Activated B cell treated with CpG ODN at 0.5 μM for 24 hours (primary cell): ENCODE measurements at regions of chr17 and their contacts with region 1.

Region 1: GRCh38 chr17:75109407-75110233 is at the start of gene ARMC7:
- DNase-seq: peak; percentile 91
- ATAC-seq: peak; percentile 80
- H3K4me3 Mint-ChIP-seq: peak within 1 kb of the TSS; percentile 89
- H3K27ac Mint-ChIP-seq: peak within 1 kb of the TSS; percentile 87
- H3K4me1 Mint-ChIP-seq: peaks cover 36% of the 10 kb centered on the region
- H3K27me3 Mint-ChIP-seq: no peaks in the 10 kb centered on the region
- CTCF ChIP-seq: no peak
- total RNA-seq, gene ARMC7: 11.8 and 15.4 TPM in 2 replicates

Region 2: GRCh38 chr17:75046582-75047289 is 62.9 kb before region 1 on chr17 and contains the starts of genes ATP5PD and KCTD2:
- CTCF ChIA-PET with region 1: interaction called, 4 read pairs
- POLR2A ChIA-PET with region 1: interaction called, 9 read pairs
- intact Hi-C with region 1: loop called (anchors 1 kb)
- DNase-seq: peak; percentile 91
- ATAC-seq: peak; percentile 95
- H3K4me3 Mint-ChIP-seq: peak within 1 kb of the TSS; percentile 97
- H3K27ac Mint-ChIP-seq: peak within 1 kb of the TSS; percentile 86
- H3K4me1 Mint-ChIP-seq: peaks cover 37% of the 10 kb centered on the region
- H3K27me3 Mint-ChIP-seq: no peaks in the 10 kb centered on the region
- CTCF ChIP-seq: no peak
- total RNA-seq, gene ATP5PD: 158 and 181 TPM in 2 replicates
- total RNA-seq, gene KCTD2: 19.5 and 20.2 TPM in 2 replicates

Region 3: GRCh38 chr17:75124041-75124818 is 14.6 kb after region 1 on chr17:
- CTCF ChIA-PET with region 1: interaction called, 116 read pairs
- POLR2A ChIA-PET with region 1: interaction called, 292 read pairs
- intact Hi-C with region 1: no loop called
- DNase-seq: no peak
- ATAC-seq: peak; percentile 75
- H3K4me3 Mint-ChIP-seq: no peak overlapping the region
- H3K27ac Mint-ChIP-seq: peak overlapping the region; percentile 41
- H3K4me1 Mint-ChIP-seq: peaks cover 36% of the 10 kb centered on the region
- H3K27me3 Mint-ChIP-seq: no peaks in the 10 kb centered on the region
- CTCF ChIP-seq: no peak

Region 4: DNA sequence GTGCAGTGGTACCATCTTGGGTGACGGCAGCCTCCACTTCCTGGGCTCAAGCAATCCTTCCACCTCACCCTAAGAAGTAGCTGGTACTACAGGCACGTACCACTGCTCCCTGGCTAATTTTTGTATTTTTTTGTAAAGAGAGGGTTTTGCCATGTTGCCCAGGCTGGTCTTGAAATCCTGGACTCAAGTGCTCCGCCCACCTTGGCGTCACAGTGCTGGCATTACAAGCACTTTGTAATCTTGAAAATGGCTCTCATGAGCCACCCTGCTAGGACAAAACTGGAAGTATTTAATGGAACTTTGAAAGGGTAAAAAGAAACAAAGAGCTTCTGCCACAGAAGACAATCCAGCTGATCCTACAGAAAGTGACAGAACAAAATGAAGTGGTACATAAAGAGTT is 63.9 kb after region 1 on chr17:
- CTCF ChIA-PET with region 1: interaction called, 192 read pairs
- POLR2A ChIA-PET with region 1: interaction called, 59 read pairs
- intact Hi-C with region 1: loop called (anchors 1 kb)
- DNase-seq: no peak
- ATAC-seq: no peak
- H3K4me3 Mint-ChIP-seq: no peak overlapping the region
- H3K27ac Mint-ChIP-seq: peak overlapping the region; percentile 46
- H3K4me1 Mint-ChIP-seq: peaks cover 16% of the 10 kb centered on the region
- H3K27me3 Mint-ChIP-seq: no peaks in the 10 kb centered on the region
- CTCF ChIP-seq: no peak

Region 5: GRCh38 chr17:75238684-75239191 is 129.1 kb after region 1 on chr17:
- CTCF ChIA-PET with region 1: interaction called, 10 read pairs
- POLR2A ChIA-PET with region 1: interaction called, 7 read pairs
- intact Hi-C with region 1: loop called (anchors 1 kb)
- DNase-seq: peak; percentile 53
- ATAC-seq: peak; percentile 72
- H3K4me3 Mint-ChIP-seq: peak overlapping the region; percentile 57
- H3K27ac Mint-ChIP-seq: peak overlapping the region; percentile 83
- H3K4me1 Mint-ChIP-seq: peaks cover 35% of the 10 kb centered on the region
- H3K27me3 Mint-ChIP-seq: no peaks in the 10 kb centered on the region
- CTCF ChIP-seq: no peak

Region 6: GRCh38 chr17:75277664-75278071 is 168.0 kb after region 1 on chr17:
- CTCF ChIA-PET with region 1: no interaction called
- POLR2A ChIA-PET with region 1: no interaction called
- intact Hi-C with region 1: no loop called
- DNase-seq: no peak
- ATAC-seq: no peak
- H3K4me3 Mint-ChIP-seq: no peak overlapping the region
- H3K27ac Mint-ChIP-seq: no peak overlapping the region
- H3K4me1 Mint-ChIP-seq: peaks cover 1% of the 10 kb centered on the region
- H3K27me3 Mint-ChIP-seq: no peaks in the 10 kb centered on the region
- CTCF ChIP-seq: no peak

Region 7: GRCh38 chr17:75412455-75413317 is 303.1 kb after region 1 on chr17:
- CTCF ChIA-PET with region 1: interaction called, 6 read pairs
- POLR2A ChIA-PET with region 1: interaction called, 7 read pairs
- intact Hi-C with region 1: loop called (anchors 1 kb)
- DNase-seq: peak; percentile 63
- ATAC-seq: peak; percentile 94
- H3K4me3 Mint-ChIP-seq: peak overlapping the region; percentile 53
- H3K27ac Mint-ChIP-seq: peak overlapping the region; percentile 63
- H3K4me1 Mint-ChIP-seq: peaks cover 12% of the 10 kb centered on the region
- H3K27me3 Mint-ChIP-seq: no peaks in the 10 kb centered on the region
- CTCF ChIP-seq: peak; percentile 9